H1 (cell line): ENCODE measurements at regions of chr4 and their contacts with region 1.

Region 1: GRCh38 chr4:108130954-108131353 is 37.8 kb downstream of the LEF1 start:
- DNase-seq: no peak
- H3K4me3 ChIP-seq: no peak overlapping the region
- H3K27ac ChIP-seq: no peak overlapping the region
- H3K4me1 ChIP-seq: peaks cover 4 to 7% (median 5%) of the 10 kb centered on the region in 4 experiments; a peak in 6 of 7 replicates
- H3K27me3 ChIP-seq: no peaks in the 10 kb centered on the region; a peak in 1 of 7 replicates
- CTCF ChIP-seq: peak; percentile 50 to 65 (median 52)
- EP300 ChIP-seq: no peak
- POLR2A ChIP-seq: no peak
- RAD21 ChIP-seq: peak; percentile 44 to 60; a peak in 3 of 4 replicates

Region 2: GRCh38 chr4:108118490-108118889 is 12.5 kb before region 1 on chr4:
- CTCF ChIA-PET with region 1: interaction called, 15 read pairs
- POLR2A ChIA-PET with region 1: no interaction called
- DNase-seq: no peak
- H3K4me3 ChIP-seq: no peak overlapping the region
- H3K27ac ChIP-seq: no peak overlapping the region
- H3K4me1 ChIP-seq: peaks cover 0 to 7% (median 3%) of the 10 kb centered on the region in 4 experiments; a peak in 4 of 7 replicates
- H3K27me3 ChIP-seq: no peaks in the 10 kb centered on the region
- CTCF ChIP-seq: no peak
- EP300 ChIP-seq: no peak
- POLR2A ChIP-seq: no peak
- RAD21 ChIP-seq: no peak

Region 3: DNA sequence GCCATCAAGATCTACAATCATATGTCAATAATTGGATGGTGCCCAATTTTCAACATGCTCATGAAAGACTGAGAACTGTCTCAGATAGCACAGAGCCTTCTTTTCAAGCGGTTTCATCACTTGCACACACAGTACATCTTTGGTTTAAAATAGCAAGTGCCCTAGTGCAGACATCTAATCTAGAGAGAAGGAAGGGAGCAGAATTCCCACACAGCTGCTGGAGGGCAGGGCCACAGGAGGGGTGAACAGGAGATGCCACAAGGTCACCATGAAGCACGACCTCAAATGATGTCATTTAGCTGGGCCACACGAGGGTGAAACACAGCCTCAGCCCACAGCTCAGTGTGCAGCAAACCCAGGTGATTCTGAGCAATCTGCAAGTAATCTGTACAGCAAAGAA is 13.5 kb after region 1 on chr4:
- CTCF ChIA-PET with region 1: interaction called, 14 read pairs
- POLR2A ChIA-PET with region 1: interaction called, 4 read pairs
- DNase-seq: no peak
- H3K4me3 ChIP-seq: no peak overlapping the region
- H3K27ac ChIP-seq: no peak overlapping the region
- H3K4me1 ChIP-seq: peaks cover 3 to 17% (median 10%) of the 10 kb centered on the region in 4 experiments; a peak in 6 of 7 replicates
- H3K27me3 ChIP-seq: peaks cover 0 to 4% (median 2%) of the 10 kb centered on the region in 4 experiments; a peak in 5 of 7 replicates
- CTCF ChIP-seq: no peak
- EP300 ChIP-seq: no peak
- POLR2A ChIP-seq: no peak
- RAD21 ChIP-seq: no peak